ENCODE measurements at regions of chr6 and their contacts with region 1.

Region 1: GRCh38 chr6:137283940-137284810 is 65.0 kb upstream of the IFNGR1 start:
- DNase-seq: peak; percentile 56
- CTCF ChIP-seq: no peak

Region 2: GRCh38 chr6:137133122-137133521 is 151.1 kb before region 1 on chr6:
- CTCF ChIA-PET with region 1: no interaction called
- POLR2A ChIA-PET with region 1: no interaction called
- DNase-seq: no peak
- CTCF ChIP-seq: no peak

Region 3: DNA sequence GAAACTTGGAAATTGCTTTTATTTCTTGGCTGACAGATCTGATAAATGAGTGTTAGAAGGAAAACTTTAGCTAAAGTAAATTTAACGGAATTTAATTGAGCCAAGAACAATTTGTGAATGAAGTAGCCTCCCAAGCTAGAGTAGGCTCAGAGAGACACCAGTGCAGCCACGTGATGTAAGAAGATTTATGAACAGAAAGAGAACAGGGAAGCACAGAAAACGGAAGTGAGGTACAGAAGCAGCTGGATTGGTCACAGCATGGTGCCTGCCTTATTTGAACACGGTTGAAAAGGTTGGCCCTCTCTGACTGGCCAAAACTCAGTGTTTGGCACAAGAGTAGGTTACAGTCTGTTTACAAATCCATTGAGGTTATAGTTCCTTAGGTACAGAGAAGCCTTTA is 35.5 kb before region 1 on chr6:
- CTCF ChIA-PET with region 1: no interaction called
- POLR2A ChIA-PET with region 1: no interaction called
- DNase-seq: no peak
- CTCF ChIP-seq: no peak

Region 4: DNA sequence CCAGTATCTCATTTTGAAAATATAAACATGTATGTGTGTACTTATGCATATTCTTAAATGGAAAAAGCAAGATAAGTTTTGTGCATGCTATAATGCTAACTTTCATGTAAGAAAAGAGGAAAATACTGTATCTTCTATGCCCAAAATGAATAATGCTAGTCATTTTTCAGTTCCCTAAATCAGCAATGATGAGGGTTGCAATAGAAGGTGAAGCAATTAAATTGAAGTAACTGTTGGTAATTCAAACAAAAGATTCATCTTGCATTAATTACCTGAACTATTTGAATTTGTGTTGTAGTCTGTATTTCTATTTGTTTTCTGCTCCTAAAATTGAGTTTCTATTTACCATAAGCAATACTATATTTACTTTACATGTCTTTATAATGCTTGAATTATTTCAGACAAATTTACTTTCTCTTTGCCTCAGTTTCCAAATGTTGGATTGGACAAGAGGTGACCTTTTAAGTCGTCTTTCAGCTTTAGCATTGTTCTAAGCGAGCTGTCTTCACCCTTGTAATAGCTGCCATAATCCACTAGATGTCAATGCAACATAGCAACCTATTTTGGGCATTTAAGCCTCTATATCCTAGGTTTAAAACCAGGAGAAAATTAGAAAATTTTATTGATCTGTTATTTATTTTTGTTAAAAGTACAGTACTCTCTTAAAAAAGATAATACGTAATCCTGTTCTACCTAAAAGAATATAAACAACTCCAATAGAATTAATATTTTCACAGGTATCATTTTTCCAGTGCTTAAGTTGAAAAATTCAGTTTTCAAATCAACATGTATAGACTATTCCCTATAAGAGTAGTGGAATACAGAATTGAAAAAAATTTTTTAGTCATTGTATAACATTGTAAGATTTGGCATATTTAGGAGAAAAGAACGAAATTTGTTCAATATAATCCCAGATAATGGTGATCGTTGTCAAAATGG is 12.7 kb before region 1 on chr6:
- CTCF ChIA-PET with region 1: interaction called, 17 read pairs
- POLR2A ChIA-PET with region 1: no interaction called
- DNase-seq: peak; percentile 29
- CTCF ChIP-seq: peak; percentile 84

Region 5: DNA sequence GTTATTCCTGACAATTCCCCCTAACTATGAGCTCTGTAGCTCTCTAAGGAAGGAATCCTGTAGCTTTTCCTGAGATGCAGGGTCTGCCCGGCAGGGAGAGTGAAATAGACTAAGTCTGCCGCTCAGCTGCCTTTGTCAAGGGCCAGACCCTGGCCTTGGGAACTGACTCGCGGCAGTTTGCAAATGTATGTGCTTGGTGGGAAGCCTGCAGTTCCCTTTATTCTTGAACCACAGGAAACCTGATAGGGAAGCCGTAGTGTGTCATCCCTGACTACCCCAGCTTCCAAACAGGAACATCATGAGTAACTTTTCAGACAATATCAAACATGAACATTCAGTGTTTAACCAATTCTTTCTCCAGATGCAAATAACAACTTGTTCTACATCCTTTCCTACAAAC is 13.7 kb after region 1 on chr6:
- CTCF ChIA-PET with region 1: interaction called, 16 read pairs
- POLR2A ChIA-PET with region 1: no interaction called
- DNase-seq: no peak
- CTCF ChIP-seq: no peak

Region 6: GRCh38 chr6:137370871-137371633 is 86.9 kb after region 1 on chr6:
- CTCF ChIA-PET with region 1: no interaction called
- POLR2A ChIA-PET with region 1: no interaction called
- DNase-seq: peak; percentile 19
- CTCF ChIP-seq: no peak

Measured in GM10248 (cell line).